Heart right ventricle (tissue), 16 donors: ENCODE measurements at regions of chr6 and their contacts with region 1.

Region 1: DNA sequence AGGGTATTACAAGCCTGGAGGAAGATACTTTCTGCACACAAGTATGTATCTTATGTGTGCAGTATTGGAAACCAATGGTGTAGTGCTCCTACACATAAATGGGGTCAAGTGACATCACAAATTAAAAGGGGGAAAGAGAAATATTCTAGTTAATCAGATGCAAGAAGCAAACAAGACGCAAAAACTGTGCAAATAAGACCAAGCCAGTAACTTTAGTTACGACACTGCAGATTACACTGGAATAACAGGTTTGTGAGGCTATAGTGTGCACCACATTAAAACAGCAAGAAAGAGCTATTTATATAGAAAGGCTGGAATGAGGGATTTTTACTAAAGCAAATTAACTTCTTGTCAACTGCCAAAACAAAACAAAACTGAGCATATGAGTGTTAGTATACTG is 45.8 kb downstream of the NR2E1 start:
- DNase-seq: no peak
- ATAC-seq: no peak
- H3K4me3 ChIP-seq: no peak overlapping the region
- H3K27ac ChIP-seq: no peak overlapping the region
- H3K4me1 ChIP-seq: peaks cover 0 to 22% (median 0%) of the 10 kb centered on the region in 9 donors
- H3K27me3 ChIP-seq: no peaks in the 10 kb centered on the region
- CTCF ChIP-seq: no peak

Region 2: DNA sequence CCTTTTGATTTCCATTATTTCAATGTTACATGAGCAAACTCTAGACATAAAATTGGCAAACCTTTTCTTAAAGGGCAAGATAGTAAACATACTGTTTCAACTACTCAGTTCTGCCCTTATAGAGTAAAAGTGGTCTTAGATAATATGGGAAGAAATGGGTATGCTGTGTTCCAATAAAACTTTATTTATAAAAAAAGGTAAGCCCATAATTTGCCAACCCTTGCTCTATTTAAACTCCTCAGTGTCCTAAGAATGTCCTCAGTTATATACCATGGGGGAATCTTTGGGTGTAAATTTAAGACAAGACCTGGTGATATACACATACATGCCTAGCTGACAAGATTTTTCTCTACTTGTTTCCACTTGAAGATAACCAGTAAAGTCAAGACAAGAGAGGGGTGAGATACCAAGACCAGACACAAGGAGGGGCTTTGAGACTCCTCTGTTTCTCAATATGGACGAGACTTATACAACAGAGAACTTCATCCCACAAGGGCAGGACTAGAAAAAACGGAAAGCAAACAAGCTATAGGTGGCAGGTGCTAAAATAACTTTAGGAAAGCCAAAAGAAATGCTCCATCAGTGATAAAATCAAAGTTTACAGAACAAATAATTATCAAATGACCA is 38.7 kb after region 1 on chr6:
- intact Hi-C with region 1: no loop called
- DNase-seq: no peak
- ATAC-seq: no peak
- H3K4me3 ChIP-seq: no peak overlapping the region
- H3K27ac ChIP-seq: no peak overlapping the region
- H3K4me1 ChIP-seq: peaks cover 4 to 70% (median 45%) of the 10 kb centered on the region in 9 donors
- H3K27me3 ChIP-seq: no peaks in the 10 kb centered on the region
- CTCF ChIP-seq: peak in 2 of 9 donors; percentile 9 to 13

Region 3: DNA sequence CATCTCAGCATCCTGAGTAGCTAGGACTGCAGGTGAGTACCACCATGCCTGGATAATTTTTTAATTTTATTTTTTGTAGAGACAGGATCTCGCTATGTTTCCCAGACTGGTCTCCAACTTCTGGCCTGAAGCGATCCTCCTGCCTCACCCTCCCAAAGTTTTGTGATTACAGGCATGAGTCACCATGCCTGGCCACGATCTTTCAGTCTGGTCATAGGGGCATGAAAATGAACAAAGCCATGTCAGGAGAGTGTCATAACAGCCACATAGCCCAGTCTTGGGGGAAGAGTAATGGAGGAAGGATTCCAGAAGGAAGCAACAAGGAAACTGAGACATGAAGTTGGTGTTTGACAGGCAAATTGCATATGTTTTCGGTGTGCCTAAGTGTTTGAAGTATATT is 66.2 kb after region 1 on chr6:
- intact Hi-C with region 1: loop called in 1 of 10 experiments (anchors 2 kb)
- DNase-seq: no peak
- ATAC-seq: no peak
- H3K4me3 ChIP-seq: no peak overlapping the region
- H3K27ac ChIP-seq: no peak overlapping the region
- H3K4me1 ChIP-seq: no peaks in the 10 kb centered on the region
- H3K27me3 ChIP-seq: no peaks in the 10 kb centered on the region
- CTCF ChIP-seq: no peak